Caco-2 (cell line): ENCODE measurements at regions of chr10 and their contacts with region 1.

Region 1: DNA sequence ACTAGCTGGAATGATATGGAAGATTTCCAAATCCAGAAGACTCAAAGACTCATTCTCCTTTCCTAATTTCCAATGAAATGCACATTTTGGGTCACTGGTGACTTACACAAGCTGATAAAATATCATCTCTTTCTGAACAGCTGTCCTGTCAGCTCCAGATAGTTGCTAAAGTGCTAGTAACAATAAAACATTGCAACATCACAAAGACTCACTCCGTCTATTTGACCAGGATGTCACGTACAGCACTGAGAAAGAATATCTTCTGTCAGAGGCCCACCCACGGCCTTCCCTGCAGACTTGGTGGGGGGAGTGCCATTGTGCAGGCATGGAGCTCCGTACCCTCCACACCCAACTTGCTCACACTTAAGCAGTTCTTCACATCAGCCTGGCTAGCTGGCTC is 78.9 kb upstream of the EGR2 start:
- DNase-seq: no peak
- H3K4me3 ChIP-seq: no peak overlapping the region
- H3K4me3 Mint-ChIP-seq: no peak overlapping the region
- H3K27ac Mint-ChIP-seq: no peak overlapping the region
- H3K4me1 ChIP-seq: no peaks in the 10 kb centered on the region
- H3K4me1 Mint-ChIP-seq: no peaks in the 10 kb centered on the region
- H3K27me3 ChIP-seq: no peaks in the 10 kb centered on the region; the same call in 1 of the 2 replicates
- H3K27me3 Mint-ChIP-seq: peaks cover 33% of the 10 kb centered on the region
- CTCF ChIP-seq: no peak

Region 2: GRCh38 chr10:62732841-62733653 is 162.0 kb before region 1 on chr10:
- CTCF ChIA-PET with region 1: no interaction called
- POLR2A ChIA-PET with region 1: no interaction called
- intact Hi-C with region 1: loop called (anchors 5 kb)
- DNase-seq: no peak
- H3K4me3 ChIP-seq: no peak overlapping the region
- H3K4me3 Mint-ChIP-seq: no peak overlapping the region
- H3K27ac Mint-ChIP-seq: no peak overlapping the region
- H3K4me1 ChIP-seq: no peaks in the 10 kb centered on the region
- H3K4me1 Mint-ChIP-seq: no peaks in the 10 kb centered on the region
- H3K27me3 ChIP-seq: no peaks in the 10 kb centered on the region
- H3K27me3 Mint-ChIP-seq: peaks cover 3% of the 10 kb centered on the region
- CTCF ChIP-seq: no peak